ENCODE measurements at regions of chr2 and their contacts with region 1.

Region 1: DNA sequence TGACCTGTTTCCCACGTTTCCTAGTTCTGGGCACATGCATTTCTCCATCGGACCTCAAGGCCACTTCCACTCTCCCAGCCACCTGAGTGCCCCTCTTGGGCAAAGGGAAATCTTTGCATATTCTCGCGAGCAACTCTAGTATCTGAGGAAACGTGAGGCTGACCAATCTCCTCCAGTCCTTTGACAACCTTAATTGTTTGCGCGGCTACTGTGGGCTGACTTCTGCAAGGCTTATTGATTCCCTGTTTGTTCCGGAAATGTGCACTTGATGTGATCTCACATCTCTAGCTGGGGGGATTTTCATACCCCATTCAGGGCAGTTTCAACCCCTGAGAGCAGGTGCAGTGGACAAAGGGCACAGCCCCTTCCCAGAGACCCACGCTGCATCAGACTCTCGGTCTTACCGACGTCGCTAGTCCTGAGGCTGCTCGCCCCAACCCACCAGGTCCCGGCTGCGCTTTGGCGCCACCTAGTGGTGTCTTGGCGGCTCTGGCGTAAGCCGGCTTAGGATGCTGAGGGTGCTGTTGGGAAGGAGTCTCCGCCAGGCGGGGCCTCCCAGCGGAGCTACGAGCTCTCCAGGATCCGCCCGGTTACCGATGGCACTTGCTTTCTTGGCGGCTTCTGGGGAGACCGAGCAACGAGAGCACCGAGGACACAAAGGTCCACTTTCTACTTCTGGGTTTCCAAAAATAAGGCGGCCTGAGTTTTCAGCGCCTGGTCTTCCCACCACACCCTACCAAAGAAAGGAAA is 24.8 kb upstream of the SPR start:
- DNase-seq: peak; percentile 92
- H3K4me3 Mint-ChIP-seq: peak overlapping the region; percentile 21
- H3K27ac Mint-ChIP-seq: no peak overlapping the region
- H3K4me1 Mint-ChIP-seq: peaks cover 9% of the 10 kb centered on the region
- H3K27me3 Mint-ChIP-seq: peaks cover 50% of the 10 kb centered on the region

Region 2: GRCh38 chr2:72770879-72771461 is 91.4 kb before region 1 on chr2:
- CTCF ChIA-PET with region 1: interaction called, 26 read pairs
- POLR2A ChIA-PET with region 1: no interaction called
- intact Hi-C with region 1: loop called (anchors 1 kb)
- DNase-seq: peak; percentile 38
- H3K4me3 Mint-ChIP-seq: no peak overlapping the region
- H3K27ac Mint-ChIP-seq: no peak overlapping the region
- H3K4me1 Mint-ChIP-seq: no peaks in the 10 kb centered on the region
- H3K27me3 Mint-ChIP-seq: no peaks in the 10 kb centered on the region

Region 3: DNA sequence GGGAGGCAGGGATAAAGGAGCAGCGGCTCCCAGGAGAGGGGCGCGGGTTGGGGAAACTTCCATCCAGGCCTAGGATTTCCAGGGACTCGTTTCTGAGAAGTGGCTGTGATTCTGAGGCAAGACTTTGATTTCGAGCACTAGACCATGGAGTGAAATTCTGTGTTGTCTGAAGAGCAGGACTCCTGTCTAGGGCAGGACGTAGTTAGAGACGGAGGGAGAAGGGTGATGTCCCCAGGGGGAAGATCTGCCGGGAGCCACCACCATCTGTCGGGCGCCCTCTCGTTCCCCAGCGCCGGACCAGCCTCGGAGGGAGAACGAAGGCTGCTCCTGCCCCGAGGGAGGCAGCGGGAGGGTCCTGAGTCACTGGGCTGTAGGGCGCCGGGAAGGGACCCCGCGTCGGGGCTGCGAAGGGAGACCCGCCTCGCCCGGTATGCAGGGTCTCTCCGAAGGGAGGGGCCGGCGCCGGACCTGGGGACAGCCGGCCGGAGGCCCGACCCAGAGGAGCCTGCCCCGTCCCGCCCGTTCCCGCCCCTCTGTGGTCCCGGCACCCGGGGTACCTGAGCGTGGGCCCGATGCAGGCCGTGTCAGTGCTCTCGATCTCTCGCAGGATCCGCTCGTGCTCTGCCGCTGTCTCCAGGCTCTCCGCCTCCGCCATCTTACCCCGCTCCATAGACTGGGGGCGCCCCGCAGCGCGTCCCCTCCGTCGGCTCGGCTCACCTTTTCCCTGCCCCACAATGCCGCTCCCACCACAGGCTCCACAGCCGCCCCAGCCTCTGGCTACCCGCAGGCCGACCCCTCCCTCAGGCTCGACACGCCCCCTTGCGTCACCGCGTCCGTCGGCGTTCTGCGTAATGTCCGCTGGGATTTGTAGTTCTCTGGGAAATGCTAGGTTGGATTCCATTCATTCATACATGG is 36.9 kb before region 1 on chr2 and contains the start of gene EXOC6B:
- CTCF ChIA-PET with region 1: interaction called, 14 read pairs
- POLR2A ChIA-PET with region 1: no interaction called
- intact Hi-C with region 1: loop called (anchors 1 kb)
- DNase-seq: peak; percentile 89
- H3K4me3 Mint-ChIP-seq: peak within 1 kb of the TSS; percentile 83
- H3K27ac Mint-ChIP-seq: peak within 1 kb of the TSS; percentile 2
- H3K4me1 Mint-ChIP-seq: peaks cover 38% of the 10 kb centered on the region
- H3K27me3 Mint-ChIP-seq: no peaks in the 10 kb centered on the region
- total RNA-seq, gene EXOC6B: 8.5 to 8.6 TPM

Region 4: GRCh38 chr2:72841462-72842125 is 20.8 kb before region 1 on chr2:
- CTCF ChIA-PET with region 1: interaction called, 15 read pairs
- POLR2A ChIA-PET with region 1: no interaction called
- intact Hi-C with region 1: no loop called
- DNase-seq: no peak
- H3K4me3 Mint-ChIP-seq: no peak overlapping the region
- H3K27ac Mint-ChIP-seq: no peak overlapping the region
- H3K4me1 Mint-ChIP-seq: no peaks in the 10 kb centered on the region
- H3K27me3 Mint-ChIP-seq: peaks cover 18% of the 10 kb centered on the region

Region 5: GRCh38 chr2:72851321-72851720 is 11.1 kb before region 1 on chr2:
- CTCF ChIA-PET with region 1: interaction called, 11 read pairs
- POLR2A ChIA-PET with region 1: interaction called, 4 read pairs
- intact Hi-C with region 1: no loop called
- DNase-seq: no peak
- H3K4me3 Mint-ChIP-seq: no peak overlapping the region
- H3K27ac Mint-ChIP-seq: no peak overlapping the region
- H3K4me1 Mint-ChIP-seq: no peaks in the 10 kb centered on the region
- H3K27me3 Mint-ChIP-seq: peaks cover 32% of the 10 kb centered on the region

Region 6: DNA sequence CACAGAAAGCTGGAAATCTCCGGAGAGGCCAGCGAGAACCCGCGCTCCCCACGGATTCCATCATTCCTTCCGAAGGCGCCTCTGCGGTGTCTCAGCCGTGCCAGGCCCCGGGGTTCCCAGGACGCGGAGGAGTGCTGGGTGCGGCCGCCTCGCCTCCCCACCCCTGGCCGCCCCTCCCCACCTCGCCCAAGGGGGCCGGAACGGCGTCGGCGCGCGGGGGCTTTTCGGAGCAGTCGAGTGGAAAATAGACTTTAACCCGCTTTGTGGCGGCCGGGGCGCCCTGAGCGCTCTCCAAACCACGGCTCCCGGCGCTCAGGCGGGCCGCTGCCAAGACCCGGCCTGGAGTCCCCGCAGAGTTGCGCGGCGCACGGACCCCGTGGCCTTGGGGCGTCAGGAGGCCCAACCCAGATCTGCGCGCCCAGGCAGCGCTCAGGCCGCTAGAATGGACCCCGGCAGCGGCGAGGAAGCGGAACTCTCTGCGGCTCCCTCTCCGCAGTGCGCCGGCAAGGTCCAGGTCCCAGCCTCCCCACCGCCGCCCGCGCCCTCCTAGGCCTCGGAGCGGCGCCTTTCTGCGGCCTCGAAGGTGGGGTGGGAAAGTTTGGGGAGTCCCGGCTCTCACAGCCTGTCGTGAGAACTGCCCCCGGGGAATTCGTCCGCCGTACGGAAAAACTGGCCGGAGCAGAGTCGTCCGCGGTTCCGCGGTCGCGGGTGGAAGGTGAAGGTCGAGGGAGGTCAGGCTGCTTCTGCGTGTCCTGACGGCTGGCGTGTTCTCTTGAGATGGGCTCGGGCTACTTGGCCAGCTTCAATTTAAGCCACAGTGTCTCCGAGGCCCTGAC is 53.7 kb after region 1 on chr2:
- CTCF ChIA-PET with region 1: interaction called, 10 read pairs
- POLR2A ChIA-PET with region 1: interaction called, 3 read pairs
- intact Hi-C with region 1: loop called (anchors 5 kb)
- DNase-seq: peak; percentile 61
- H3K4me3 Mint-ChIP-seq: peak overlapping the region; percentile 66
- H3K27ac Mint-ChIP-seq: no peak overlapping the region
- H3K4me1 Mint-ChIP-seq: peaks cover 26% of the 10 kb centered on the region
- H3K27me3 Mint-ChIP-seq: peaks cover 73% of the 10 kb centered on the region

Region 7: DNA sequence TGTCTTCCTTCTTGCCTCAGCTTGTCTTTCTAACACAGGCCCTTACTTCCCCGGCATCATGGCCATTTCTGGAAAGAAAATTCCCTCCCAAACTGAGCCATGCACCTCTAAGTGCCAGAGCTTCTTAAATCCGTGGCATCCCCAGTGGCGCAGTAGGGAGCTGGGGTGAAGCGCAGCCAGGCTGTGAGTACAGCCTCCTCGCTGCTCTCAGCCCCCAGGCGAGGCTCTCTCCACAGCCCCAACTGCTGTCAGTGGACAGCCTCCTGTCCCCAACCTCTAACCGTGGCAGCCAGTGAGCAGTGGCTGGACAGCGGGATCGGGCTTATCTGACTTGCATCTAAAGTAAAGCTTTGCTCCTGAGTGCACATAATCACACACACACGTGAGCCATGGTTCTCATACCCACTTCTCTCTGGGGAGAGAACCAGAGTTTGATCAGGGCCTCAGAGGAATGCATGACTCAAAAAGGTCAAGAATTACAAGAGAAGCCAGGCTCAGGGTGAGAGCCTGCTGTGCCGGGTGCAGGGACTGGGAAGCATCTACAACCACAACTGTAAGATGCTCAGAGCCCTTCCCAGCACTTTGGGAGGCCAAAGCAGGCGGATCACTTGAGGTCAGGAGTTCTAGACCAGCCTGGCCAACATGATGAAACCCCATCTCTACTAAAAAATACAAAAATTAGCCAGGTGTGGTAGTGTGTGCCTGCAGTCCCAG is 158.4 kb after region 1 on chr2:
- CTCF ChIA-PET with region 1: no interaction called
- POLR2A ChIA-PET with region 1: no interaction called
- intact Hi-C with region 1: no loop called
- DNase-seq: no peak
- H3K4me3 Mint-ChIP-seq: no peak overlapping the region
- H3K27ac Mint-ChIP-seq: no peak overlapping the region
- H3K4me1 Mint-ChIP-seq: no peaks in the 10 kb centered on the region
- H3K27me3 Mint-ChIP-seq: no peaks in the 10 kb centered on the region